ENCODE measurements at regions of chr6 and their contacts with region 1.

Region 1: GRCh38 chr6:129644567-129645015 is 65.4 kb downstream of the ARHGAP18 start:
- DNase-seq: peak; percentile 93

Region 2: DNA sequence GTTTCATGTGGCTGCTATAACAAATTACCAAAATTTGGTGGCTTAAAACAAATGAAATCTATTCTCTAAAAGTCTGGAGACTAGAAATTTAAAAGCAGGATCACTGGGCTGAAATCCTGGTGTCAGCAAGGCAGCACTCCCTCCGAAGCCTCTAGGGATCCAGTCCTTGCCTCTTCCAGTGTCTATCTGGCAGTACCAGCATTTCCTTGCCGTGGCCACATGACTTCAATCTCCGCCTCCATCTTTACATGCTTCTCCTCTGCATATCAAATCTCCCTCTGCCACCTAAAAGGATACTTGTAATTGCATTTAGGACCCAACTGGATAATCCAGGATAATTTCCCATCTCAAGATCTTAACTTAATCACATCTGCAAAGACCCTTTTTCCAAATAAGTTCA is 35.2 kb after region 1 on chr6:
- in situ Hi-C with region 1: loop called (anchors 5 kb)
- DNase-seq: no peak

Measured in Caki2 (cell line).